Activated CD4-positive, alpha-beta T cell treated with anti-CD3 and anti-CD28 coated beads for 36 hours (primary cell): ENCODE measurements at regions of chr11 and their contacts with region 1.

Region 1: GRCh38 chr11:93662177-93662575 is 694 bp downstream of the CEP295 start:
- DNase-seq: no peak
- ATAC-seq: no peak
- H3K4me3 Mint-ChIP-seq: peak overlapping the region; percentile 94
- H3K27ac Mint-ChIP-seq: peak overlapping the region; percentile 95
- H3K4me1 Mint-ChIP-seq: peaks cover 44% of the 10 kb centered on the region
- H3K27me3 Mint-ChIP-seq: no peaks in the 10 kb centered on the region

Region 2: DNA sequence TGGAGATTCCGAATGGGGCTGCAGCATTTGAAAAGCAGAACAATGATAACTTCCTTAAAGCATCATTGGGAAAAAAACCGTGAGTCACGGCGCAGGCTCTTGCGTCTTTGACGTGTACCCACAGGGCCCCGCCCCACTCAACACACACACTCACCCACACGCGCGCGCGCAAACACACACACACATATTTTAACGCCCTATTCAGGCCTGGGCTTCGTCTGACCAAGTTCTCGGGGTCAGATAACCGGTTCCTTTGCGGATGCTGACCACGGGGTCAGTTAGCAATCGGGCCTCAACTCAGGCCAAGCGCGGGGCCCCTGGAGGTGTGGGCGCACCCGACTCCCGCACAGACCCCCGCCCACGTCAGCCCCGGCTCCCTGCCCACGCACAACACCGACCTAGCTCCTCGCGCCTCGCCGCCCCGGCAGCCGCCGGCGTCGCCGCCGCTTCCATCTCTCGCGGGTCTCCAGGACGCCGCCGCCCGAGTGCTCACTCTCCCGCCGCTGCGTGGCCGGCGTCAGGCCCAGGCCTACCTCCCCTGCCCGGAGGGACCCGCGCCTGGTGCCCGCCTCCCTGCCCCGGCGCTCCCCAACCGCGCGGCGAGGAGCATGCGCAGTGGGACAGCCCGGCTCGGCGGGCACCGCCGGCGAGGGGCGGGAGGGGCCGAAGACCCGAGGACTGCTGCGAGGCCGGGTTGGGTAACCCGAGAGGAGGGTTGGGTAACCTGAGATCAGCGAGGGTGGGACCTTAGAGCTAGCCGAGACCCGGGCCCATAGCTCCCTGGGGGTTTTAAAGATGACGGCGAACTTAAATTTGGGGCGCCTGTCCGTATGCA is 464.6 kb before region 1 on chr11 and contains the start of gene SLC36A4:
- CTCF ChIA-PET with region 1: no interaction called
- POLR2A ChIA-PET with region 1: no interaction called
- intact Hi-C with region 1: loop called (anchors 1 to 2 kb)
- DNase-seq: peak; percentile 94
- ATAC-seq: peak; percentile 92
- H3K4me3 Mint-ChIP-seq: peak within 1 kb of the TSS; percentile 94
- H3K27ac Mint-ChIP-seq: peak within 1 kb of the TSS; percentile 97
- H3K4me1 Mint-ChIP-seq: peaks cover 19% of the 10 kb centered on the region
- H3K27me3 Mint-ChIP-seq: peaks cover 1% of the 10 kb centered on the region
- total RNA-seq, gene SLC36A4: 13.9 to 16.1 TPM

Region 3: GRCh38 chr11:93548679-93549319 is 113.4 kb before region 1 on chr11:
- CTCF ChIA-PET with region 1: no interaction called
- POLR2A ChIA-PET with region 1: no interaction called
- intact Hi-C with region 1: loop called (anchors 2 to 5 kb)
- DNase-seq: no peak
- ATAC-seq: no peak
- H3K4me3 Mint-ChIP-seq: no peak overlapping the region
- H3K27ac Mint-ChIP-seq: no peak overlapping the region
- H3K4me1 Mint-ChIP-seq: peaks cover 12% of the 10 kb centered on the region
- H3K27me3 Mint-ChIP-seq: peaks cover 7% of the 10 kb centered on the region